ENCODE measurements at regions of chr9 and their contacts with region 1.

Region 1: DNA sequence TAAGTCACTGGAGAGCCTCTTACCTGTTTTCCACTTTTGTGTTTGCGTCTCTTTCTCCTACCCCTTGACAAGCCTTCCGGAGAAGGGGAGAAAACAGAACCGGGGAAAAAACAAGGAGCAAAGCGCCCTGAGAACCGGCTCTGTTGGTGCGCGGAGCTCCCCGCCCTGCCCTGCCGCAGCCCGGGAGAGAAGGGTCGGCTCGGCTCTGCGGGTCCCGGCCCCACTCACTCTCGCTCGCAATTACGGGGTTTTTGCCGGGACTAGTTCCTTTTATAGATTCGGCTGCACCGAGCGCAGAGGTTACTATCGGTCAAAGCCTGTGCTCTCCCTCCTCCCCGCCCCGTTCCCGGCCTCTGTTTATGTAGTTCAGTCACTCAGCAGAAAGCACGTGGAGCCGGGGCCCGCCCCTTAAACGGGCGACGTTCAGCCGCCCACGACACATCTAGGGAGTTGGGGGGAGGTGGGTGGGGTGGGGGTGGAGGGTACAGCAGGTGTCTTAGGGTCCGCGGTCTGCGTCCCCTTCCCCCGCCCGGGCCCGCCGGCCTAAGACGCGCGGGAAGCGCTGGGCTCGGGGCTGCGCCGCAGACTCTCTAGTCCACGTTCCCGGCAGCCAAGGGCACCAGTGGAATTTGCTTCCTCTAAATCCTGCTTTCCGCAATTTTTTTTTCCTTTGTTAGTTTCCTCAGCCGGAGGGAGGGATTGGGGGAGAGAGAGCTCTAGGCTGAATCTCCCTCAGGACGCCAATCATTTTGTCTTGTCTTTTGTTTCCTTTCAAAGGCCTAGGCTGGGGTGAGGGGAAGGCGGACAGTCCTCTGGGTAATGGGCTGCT is at the start of gene ABCA1:
- DNase-seq: peak; percentile 95
- H3K4me3 ChIP-seq: peak within 1 kb of the TSS; percentile 75
- H3K27ac ChIP-seq: peak within 1 kb of the TSS; percentile 77
- H3K4me1 ChIP-seq: no peaks in the 10 kb centered on the region
- H3K27me3 ChIP-seq: no peaks in the 10 kb centered on the region
- CTCF ChIP-seq: no peak
- total RNA-seq, gene ABCA1: 11.2 to 17.8 TPM

Region 2: DNA sequence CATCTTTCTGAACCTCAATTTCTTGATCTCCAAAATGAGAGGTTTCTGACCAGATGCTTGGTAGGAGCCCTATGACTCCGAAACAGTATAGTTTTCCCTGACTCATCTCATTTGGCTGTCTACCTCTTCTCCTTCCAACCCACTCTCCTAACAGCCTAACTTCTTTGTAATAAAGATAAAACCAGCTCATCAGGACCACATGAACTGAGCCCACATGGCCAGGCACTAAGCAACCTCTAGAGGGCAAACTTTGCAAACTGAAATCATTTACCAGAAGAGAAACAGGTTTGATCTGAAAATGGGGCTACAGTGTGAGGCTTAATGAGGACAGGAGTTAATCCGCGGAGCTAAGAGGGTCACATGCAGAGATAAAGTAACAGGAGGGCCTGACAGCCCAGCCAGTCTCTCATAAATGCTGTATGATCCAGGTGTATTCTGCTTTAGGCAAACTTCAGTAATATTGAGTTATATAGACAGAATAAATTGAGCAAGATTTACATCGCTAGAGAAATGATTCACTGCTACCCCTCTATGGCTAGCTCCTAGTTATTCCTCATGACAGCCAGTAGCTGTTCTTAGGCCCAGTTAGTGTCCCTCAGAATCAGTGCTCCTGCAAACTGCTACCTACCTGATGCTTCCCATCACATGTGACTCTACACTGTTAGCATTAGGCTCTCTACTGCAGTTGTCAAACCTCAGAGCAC is 64.8 kb before region 1 on chr9:
- intact Hi-C with region 1: loop called (anchors 5 kb)
- DNase-seq: peak; percentile 47
- H3K4me3 ChIP-seq: no peak overlapping the region
- H3K27ac ChIP-seq: peak overlapping the region; percentile 28
- H3K4me1 ChIP-seq: no peaks in the 10 kb centered on the region
- H3K27me3 ChIP-seq: no peaks in the 10 kb centered on the region
- CTCF ChIP-seq: peak; percentile 73

Region 3: DNA sequence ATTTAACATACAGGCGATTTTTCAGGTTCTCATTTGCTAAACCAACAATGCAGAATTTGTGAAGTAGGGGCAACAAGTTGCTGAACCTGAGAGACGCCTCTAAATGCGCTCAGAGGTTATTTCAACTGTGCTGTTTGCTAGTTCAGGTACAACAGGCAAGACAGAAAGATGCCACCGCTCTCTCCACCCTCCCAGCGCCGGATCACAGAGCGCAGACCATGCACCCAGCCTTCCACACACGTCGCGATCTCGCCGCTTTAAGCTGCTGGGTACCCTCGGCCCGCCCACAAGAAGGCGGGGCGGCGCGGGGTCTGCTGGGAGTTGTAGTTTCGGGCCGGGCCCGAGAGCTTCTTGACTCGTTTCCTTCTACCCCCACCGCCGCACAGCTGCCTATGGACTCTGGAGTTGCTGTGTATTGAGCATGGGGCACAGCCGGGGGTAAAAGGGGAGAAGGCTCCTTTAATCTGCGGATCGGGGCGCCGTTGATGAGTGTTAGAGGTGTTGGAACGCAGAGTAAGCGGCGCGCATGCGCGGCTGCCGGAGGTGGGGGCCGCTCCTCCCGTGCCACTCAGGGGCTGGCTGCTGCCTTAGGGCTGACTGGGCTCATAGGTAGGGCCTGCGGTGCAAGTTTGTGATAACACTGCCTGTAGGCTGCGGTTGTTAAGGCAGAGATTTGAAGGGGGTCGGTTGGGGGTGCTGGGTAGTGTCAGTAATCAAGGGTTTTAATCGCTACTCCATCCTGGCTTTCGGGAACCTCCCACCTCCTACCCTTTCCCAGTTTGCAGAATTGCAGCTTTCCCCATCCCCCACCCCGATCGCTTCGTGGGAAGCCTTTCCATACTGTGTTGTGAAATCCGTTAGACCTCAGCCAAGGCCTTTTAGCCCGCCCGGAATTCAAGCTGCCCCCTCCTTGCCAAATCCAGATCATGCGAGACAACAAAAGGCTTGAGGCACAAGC is 40.2 kb after region 1 on chr9:
- intact Hi-C with region 1: loop called (anchors 5 kb)
- DNase-seq: peak; percentile 90
- H3K4me3 ChIP-seq: peak overlapping the region; percentile 69
- H3K27ac ChIP-seq: peak overlapping the region; percentile 69
- H3K4me1 ChIP-seq: no peaks in the 10 kb centered on the region
- H3K27me3 ChIP-seq: no peaks in the 10 kb centered on the region
- CTCF ChIP-seq: no peak

Region 4: GRCh38 chr9:105157130-105157583 is 229.0 kb after region 1 on chr9:
- intact Hi-C with region 1: loop called (anchors 2 kb)
- DNase-seq: peak; percentile 42
- H3K4me3 ChIP-seq: no peak overlapping the region
- H3K27ac ChIP-seq: no peak overlapping the region
- H3K4me1 ChIP-seq: no peaks in the 10 kb centered on the region
- H3K27me3 ChIP-seq: no peaks in the 10 kb centered on the region
- CTCF ChIP-seq: peak; percentile 37

Region 5: DNA sequence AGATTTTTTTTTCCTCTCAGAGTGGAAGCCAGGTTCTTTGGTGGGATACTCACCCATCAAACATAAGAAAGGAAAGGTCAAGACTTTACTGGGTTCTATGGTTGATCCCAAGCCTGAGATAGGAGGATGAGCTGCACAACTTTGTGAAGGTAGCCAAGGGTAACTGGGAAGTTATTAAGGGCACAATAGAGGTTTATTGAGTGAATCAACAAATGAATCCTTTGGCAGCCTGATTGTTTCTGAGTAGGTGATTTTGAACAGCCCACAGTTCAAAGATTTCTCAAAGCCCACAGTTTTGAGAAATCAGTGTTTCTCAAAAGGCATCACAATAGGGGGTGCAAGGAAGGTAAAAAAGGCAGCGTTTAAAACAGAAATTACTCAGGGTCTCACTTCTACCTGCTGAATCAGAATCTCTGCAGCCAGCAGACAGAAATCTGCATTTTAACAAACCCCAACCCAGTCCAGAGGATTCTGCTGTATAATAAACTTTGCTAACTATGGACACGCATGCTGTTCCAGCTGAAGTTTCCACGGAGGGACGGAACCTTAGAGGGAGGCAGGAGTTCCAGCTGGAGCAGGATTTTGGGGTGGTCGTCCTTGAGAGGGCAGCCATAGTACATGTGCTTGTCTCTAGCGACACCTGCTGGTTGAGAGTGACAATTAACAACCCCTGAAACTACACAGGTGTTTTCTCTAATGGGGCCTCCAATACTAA is 487.0 kb after region 1 on chr9:
- intact Hi-C with region 1: loop called (anchors 5 kb)
- DNase-seq: peak; percentile 72
- H3K4me3 ChIP-seq: no peak overlapping the region
- H3K27ac ChIP-seq: no peak overlapping the region
- H3K4me1 ChIP-seq: no peaks in the 10 kb centered on the region
- H3K27me3 ChIP-seq: no peaks in the 10 kb centered on the region
- CTCF ChIP-seq: peak; percentile 80

Measured in colonic mucosa (tissue), 4 donors.